GM10248 (cell line): ENCODE measurements at regions of chr15 and their contacts with region 1.

Region 1: DNA sequence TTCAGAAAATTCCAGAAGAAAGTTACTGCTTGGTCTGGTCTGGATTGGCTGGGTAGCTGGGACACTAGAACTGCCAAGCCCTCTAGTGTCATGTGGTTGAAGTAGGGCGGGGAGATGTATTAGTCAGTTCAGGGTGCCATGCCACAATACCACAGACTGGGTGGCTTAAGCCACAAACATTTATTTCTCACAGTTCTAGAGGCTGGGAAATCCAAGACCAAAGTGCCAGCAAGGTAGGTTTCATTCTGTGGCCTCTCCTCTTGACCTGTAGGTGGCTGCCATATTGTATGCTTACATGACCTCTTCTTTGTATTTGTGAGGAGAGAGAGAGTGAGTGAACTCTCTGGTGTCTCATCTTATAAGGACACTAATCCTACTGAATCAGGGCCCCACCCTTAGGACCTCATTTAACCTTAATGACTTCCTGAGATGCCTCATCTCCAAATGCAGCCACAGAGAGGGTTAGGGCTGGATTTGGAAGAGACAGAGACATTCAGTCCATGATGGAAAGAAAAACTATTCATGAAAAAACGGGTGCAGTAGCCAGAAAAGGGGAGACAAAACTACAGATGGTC is 18.1 kb upstream of the ZSCAN2 start:
- DNase-seq: no peak
- CTCF ChIP-seq: no peak

Region 2: DNA sequence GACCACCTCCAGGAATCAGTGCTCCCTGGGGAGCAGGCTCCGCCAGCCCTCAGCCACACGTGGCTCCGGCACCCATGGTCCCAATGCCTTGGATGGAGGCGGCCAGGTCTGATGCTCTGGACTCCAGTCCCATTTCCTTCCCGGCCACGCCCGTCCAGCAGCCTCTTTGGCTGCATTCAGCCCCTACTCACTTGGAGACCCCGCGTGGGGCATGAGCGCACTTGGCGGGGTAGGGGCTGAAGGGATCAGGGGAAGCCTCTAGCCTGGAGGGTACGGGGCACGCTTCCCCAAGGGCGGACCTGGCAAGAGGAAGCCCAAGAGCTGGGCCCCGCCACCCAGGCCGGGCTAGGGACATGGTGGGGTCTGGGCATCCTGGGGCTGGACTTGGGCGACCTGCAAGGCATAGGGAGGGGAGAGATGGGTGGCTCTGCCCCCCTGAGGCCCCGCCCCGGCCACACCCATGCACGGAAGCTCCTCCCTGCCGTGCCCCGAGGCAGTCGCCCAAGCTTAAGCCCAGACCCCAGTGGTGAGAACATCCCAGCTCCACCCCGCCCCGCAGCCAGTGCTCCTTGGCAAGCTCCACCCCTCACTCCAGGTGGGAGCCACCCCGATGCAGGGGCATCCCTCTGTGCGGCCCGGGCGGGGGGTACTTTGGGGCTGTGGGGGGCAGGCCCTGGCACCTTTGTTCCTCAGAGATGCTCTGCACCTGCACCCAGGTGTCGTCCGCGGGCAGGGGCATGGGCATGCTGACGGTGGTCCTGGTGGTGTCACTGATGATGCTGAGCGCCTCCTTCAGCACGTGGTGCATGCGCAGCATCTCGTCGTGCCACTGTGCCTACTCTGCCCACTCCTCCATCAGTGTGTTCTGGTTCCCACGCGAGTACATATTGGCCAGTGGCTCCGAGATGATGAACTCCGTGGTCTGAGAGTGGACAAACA is 183.6 kb before region 1 on chr15:
- CTCF ChIA-PET with region 1: no interaction called
- POLR2A ChIA-PET with region 1: no interaction called
- DNase-seq: no peak
- CTCF ChIP-seq: no peak

Region 3: GRCh38 chr15:84570164-84570735 is 12.4 kb before region 1 on chr15:
- CTCF ChIA-PET with region 1: interaction called, 63 read pairs
- POLR2A ChIA-PET with region 1: no interaction called
- DNase-seq: peak; percentile 46
- CTCF ChIP-seq: no peak